Naive thymus-derived CD4-positive, alpha-beta T cell (primary cell): ENCODE measurements at regions of chr10 and their contacts with region 1.

Region 1: DNA sequence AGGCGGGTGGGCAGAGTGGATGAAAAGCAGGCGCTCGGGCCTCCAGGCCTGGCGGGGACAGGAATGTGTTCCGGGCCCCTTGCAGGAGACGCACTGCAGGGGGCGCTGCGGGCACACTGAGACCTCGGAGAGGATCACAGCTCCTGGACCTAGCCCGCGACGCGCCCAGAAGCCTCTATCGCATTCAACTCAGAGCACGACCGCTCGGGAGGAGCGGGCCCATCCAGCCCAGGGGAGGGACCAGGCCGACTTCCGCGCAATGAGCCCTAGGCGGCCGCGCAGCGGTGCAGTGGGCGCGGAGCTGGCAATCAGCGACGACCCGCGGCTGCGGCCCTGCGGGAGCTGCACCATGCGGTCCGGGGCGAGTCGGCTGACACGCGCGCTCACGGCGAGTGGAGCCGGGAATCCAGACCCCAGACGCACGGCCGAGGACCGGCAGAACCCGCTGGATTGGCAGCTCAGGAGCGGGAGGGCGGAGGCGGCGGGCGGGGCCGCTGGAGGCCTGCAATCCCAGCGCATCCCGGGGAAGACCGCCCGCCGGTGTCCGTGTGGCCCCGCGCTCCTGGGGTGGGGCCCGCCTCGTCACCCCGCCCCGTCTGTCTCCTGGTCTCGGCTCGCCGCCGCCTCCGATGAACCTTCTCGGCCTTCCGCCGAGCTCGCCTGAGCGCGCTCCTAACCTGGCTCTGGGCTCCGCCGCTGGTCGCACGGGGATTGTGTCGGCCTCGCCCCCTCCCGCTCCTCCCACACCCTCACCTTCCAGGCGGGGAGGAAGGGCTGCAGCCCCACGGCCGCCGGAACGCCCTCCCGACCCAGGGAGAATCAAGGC is 33.5 kb upstream of the GRID1 start:
- DNase-seq: peak; percentile 86 to 93 (median 90)
- ATAC-seq: peak; percentile 95
- H3K4me3 ChIP-seq: peak overlapping the region; percentile 86
- H3K4me3 Mint-ChIP-seq: peak overlapping the region; percentile 79 to 95 (median 89)
- H3K27ac ChIP-seq: peak overlapping the region; percentile 76
- H3K27ac Mint-ChIP-seq: peak overlapping the region; percentile 83 to 97 (median 93)
- H3K4me1 ChIP-seq: peaks cover 0 to 10% of the 10 kb centered on the region in 2 donors
- H3K4me1 Mint-ChIP-seq: peaks cover 5 to 28% (median 23%) of the 10 kb centered on the region in 7 donors
- H3K27me3 ChIP-seq: no peaks in the 10 kb centered on the region
- H3K27me3 Mint-ChIP-seq: peaks cover 0 to 19% (median 0%) of the 10 kb centered on the region in 5 donors

Region 2: DNA sequence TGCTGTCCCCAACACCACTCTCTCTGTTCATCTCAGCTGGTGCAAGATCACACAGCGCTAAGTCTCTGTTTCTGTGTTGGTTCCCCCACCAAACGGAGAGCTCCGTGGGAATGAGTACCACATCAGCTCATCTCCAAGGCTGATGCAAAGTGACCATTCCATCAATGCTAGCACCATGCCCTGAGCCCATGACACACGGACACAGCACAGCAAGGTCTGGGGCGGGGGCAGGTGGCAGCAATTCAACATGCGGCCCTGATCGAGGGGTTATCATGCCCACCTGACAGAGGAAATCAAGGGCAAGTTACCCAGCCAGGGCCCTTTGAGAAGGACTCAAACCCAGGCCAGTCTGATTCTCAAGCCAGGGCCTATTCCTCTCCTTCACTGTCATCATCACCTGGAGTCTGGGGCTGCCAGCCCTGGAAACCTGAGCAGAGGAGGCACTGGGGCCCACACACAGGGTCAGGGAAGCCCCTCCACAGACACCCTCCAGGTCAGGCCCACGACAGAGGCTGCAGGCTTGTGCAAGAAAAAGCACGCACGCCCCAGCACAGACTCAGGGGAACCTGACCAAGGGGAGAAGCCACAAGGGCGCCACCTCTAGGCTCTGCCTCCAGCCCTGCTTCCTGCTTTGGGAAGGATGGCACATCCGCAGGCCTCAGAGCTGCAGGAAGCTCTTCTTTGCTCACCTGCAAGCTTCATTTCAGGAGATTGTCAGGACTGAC is 108.3 kb before region 1 on chr10:
- CTCF ChIA-PET with region 1: no interaction called
- POLR2A ChIA-PET with region 1: no interaction called
- intact Hi-C with region 1: no loop called
- DNase-seq: peak in 1 of 9 donors; percentile 11
- ATAC-seq: no peak
- H3K4me3 ChIP-seq: no peak overlapping the region
- H3K4me3 Mint-ChIP-seq: no peak overlapping the region
- H3K27ac ChIP-seq: no peak overlapping the region
- H3K27ac Mint-ChIP-seq: no peak overlapping the region
- H3K4me1 ChIP-seq: no peaks in the 10 kb centered on the region
- H3K4me1 Mint-ChIP-seq: peaks cover 0 to 2% (median 0%) of the 10 kb centered on the region in 7 donors
- H3K27me3 ChIP-seq: no peaks in the 10 kb centered on the region
- H3K27me3 Mint-ChIP-seq: peaks cover 0 to 30% (median 10%) of the 10 kb centered on the region in 5 donors

Region 3: DNA sequence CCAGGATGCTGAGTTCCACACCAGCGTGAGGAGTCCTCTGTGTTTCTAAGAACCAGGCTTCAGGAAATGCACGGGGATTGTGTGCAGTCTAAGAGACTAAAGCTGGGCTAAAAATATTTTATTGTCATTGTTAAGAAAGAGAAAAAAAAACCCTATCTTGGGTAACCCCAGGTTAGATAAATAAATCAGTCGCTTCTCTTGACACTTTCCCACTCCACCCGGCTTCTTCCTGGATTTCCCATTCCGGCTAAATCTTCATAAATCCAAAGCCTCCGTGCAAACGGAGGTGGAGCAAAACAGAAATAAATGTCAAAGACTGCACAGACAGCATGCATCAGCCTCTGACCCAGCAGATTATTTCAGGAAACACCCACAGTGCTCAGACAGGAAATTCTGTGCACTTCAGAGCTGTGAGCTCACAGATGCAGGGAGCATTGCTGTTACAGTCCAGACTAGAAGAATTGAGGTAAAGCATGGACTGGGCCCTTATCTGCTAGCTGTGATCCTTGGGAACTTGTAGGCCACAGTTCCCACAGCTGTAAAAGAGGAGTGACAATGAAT is 11.3 kb after region 1 on chr10:
- CTCF ChIA-PET with region 1: interaction called, 25 read pairs
- POLR2A ChIA-PET with region 1: interaction called, 54 read pairs
- intact Hi-C with region 1: loop called (anchors 1 kb)
- DNase-seq: peak in 7 of 9 donors; percentile 22 to 38 (median 36)
- ATAC-seq: peak; percentile 70
- H3K4me3 ChIP-seq: peak overlapping the region; percentile 8
- H3K4me3 Mint-ChIP-seq: peak overlapping the region; percentile 62 to 83 (median 77)
- H3K27ac ChIP-seq: peak overlapping the region; percentile 42
- H3K27ac Mint-ChIP-seq: peak overlapping the region; percentile 84 to 94 (median 88)
- H3K4me1 ChIP-seq: peaks cover 20 to 48% of the 10 kb centered on the region in 2 donors
- H3K4me1 Mint-ChIP-seq: peaks cover 24 to 72% (median 57%) of the 10 kb centered on the region in 7 donors
- H3K27me3 ChIP-seq: no peaks in the 10 kb centered on the region
- H3K27me3 Mint-ChIP-seq: peaks cover 0 to 3% (median 0%) of the 10 kb centered on the region in 5 donors

Region 4: DNA sequence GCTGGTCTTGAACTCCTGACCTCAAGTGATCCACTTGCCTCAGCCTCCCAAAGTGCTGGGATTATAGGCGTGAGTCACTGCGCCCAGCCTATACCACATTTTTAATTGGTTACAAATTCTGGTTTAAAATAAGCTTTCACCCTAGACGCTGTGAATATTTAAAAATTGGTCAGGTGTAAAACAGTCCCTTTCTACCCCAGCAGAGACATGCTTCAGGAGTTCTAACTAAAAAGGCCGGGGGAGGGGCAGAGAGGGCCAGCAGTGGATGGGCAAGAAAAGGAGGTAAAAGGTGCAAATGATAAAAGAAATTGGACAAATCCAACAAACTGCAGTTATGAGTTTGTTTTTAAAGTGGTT is 51.5 kb after region 1 on chr10:
- CTCF ChIA-PET with region 1: interaction called, 3 read pairs
- POLR2A ChIA-PET with region 1: no interaction called
- intact Hi-C with region 1: loop called (anchors 2 kb)
- DNase-seq: no peak
- ATAC-seq: no peak
- H3K4me3 ChIP-seq: no peak overlapping the region
- H3K4me3 Mint-ChIP-seq: no peak overlapping the region
- H3K27ac ChIP-seq: no peak overlapping the region
- H3K27ac Mint-ChIP-seq: peak overlapping the region in 6 of 9 donors; percentile 5 to 38 (median 22)
- H3K4me1 ChIP-seq: no peaks in the 10 kb centered on the region
- H3K4me1 Mint-ChIP-seq: peaks cover 15 to 45% (median 34%) of the 10 kb centered on the region in 7 donors
- H3K27me3 ChIP-seq: no peaks in the 10 kb centered on the region
- H3K27me3 Mint-ChIP-seq: no peaks in the 10 kb centered on the region

Region 5: DNA sequence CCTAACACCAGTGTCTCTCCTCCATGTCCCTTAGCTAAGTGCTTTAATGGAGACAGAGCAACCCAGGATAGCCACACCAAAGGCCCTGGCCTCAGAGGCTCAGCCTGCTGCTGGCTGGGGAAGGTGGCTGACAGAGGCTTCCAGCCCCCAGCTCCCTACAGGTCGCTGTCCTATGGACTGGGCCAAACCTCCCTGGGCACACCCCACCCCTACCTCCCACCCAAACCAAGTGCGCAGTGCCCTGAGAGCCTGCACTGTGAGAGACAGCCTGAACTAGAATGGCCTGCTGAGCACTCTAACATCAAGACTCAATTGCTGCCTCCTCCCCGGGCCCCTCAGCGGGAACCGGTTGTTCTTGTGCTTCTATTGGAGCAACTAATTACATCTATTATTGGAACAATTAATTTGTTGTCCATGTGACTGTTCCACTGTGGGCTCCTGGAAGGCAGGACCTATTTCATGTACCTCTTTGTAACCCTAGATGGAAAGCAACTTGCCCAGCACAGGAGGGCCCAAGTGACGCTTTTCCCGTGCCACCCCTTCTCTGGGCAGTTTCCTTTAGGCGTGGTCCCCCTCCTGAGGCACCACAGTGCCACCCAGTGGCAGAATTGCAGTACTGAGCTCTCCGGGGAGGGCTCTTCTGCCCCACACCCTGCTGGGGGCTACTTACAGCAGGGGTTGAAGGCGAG is 185.1 kb after region 1 on chr10:
- CTCF ChIA-PET with region 1: interaction called, 53 read pairs
- POLR2A ChIA-PET with region 1: interaction called, 15 read pairs
- intact Hi-C with region 1: loop called (anchors 1 kb)
- DNase-seq: peak; percentile 57 to 81 (median 67)
- ATAC-seq: peak; percentile 95
- H3K4me3 ChIP-seq: no peak overlapping the region
- H3K4me3 Mint-ChIP-seq: no peak overlapping the region
- H3K27ac ChIP-seq: no peak overlapping the region
- H3K27ac Mint-ChIP-seq: no peak overlapping the region
- H3K4me1 ChIP-seq: no peaks in the 10 kb centered on the region
- H3K4me1 Mint-ChIP-seq: peaks cover 0 to 4% (median 0%) of the 10 kb centered on the region in 7 donors
- H3K27me3 ChIP-seq: no peaks in the 10 kb centered on the region
- H3K27me3 Mint-ChIP-seq: peaks cover 0 to 2% (median 0%) of the 10 kb centered on the region in 5 donors

Region 6: GRCh38 chr10:86710987-86711512 is 311.0 kb after region 1 on chr10:
- CTCF ChIA-PET with region 1: interaction called, 3 read pairs
- POLR2A ChIA-PET with region 1: no interaction called
- intact Hi-C with region 1: loop called (anchors 1 kb)
- DNase-seq: peak; percentile 79 to 90 (median 85)
- ATAC-seq: peak; percentile 95
- H3K4me3 ChIP-seq: peak overlapping the region; percentile 73
- H3K4me3 Mint-ChIP-seq: peak overlapping the region; percentile 82 to 93 (median 88)
- H3K27ac ChIP-seq: peak overlapping the region; percentile 87
- H3K27ac Mint-ChIP-seq: peak overlapping the region; percentile 94 to 97 (median 95)
- H3K4me1 ChIP-seq: peaks cover 5 to 9% of the 10 kb centered on the region in 2 donors
- H3K4me1 Mint-ChIP-seq: peaks cover 4 to 17% (median 8%) of the 10 kb centered on the region in 7 donors
- H3K27me3 ChIP-seq: no peaks in the 10 kb centered on the region
- H3K27me3 Mint-ChIP-seq: no peaks in the 10 kb centered on the region

Region 7: DNA sequence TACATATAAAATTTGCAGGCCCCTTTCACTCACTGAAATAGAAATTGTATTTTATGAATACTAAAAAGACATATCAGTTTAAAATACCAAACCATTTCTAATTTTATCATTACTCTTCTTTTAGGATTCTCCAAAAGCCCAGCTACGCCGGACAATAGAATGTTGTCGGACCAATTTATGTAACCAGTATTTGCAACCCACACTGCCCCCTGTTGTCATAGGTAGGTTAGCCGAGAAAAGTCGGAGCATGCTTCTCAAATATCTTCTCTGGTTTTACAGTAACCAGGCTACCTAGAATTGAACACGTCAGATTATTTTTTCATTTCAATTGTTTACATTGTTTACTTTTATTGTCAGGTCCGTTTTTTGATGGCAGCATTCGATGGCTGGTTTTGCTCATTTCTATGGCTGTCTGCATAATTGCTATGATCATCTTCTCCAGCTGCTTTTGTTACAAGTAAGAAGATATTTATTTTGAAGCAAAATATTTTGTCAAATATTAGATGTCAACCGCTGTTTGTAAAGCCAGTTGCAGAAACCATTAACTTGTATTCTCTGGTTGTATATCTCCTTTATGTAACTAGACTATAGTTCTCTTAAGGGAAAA is 499.7 kb after region 1 on chr10:
- CTCF ChIA-PET with region 1: interaction called, 4 read pairs
- POLR2A ChIA-PET with region 1: no interaction called
- intact Hi-C with region 1: loop called in 1 of 2 experiments (anchors 2 kb)
- DNase-seq: peak in 6 of 9 donors; percentile 10 to 32 (median 26)
- ATAC-seq: peak; percentile 46
- H3K4me3 ChIP-seq: no peak overlapping the region
- H3K4me3 Mint-ChIP-seq: no peak overlapping the region
- H3K27ac ChIP-seq: no peak overlapping the region
- H3K27ac Mint-ChIP-seq: no peak overlapping the region
- H3K4me1 ChIP-seq: no peaks in the 10 kb centered on the region
- H3K4me1 Mint-ChIP-seq: peaks cover 0 to 4% (median 0%) of the 10 kb centered on the region in 7 donors
- H3K27me3 ChIP-seq: no peaks in the 10 kb centered on the region
- H3K27me3 Mint-ChIP-seq: peaks cover 0 to 8% (median 0%) of the 10 kb centered on the region in 5 donors